Left ventricle myocardium inferior (tissue), 1 donor: ENCODE measurements at regions of chr1 and their contacts with region 1.

Region 1: GRCh38 chr1:153352523-153352922 is 3.9 kb upstream of the PGLYRP4 start:
- DNase-seq: peak; percentile 62
- H3K4me3 ChIP-seq: no peak overlapping the region
- H3K27ac ChIP-seq: no peak overlapping the region
- H3K4me1 ChIP-seq: no peaks in the 10 kb centered on the region
- H3K27me3 ChIP-seq: peaks cover 55% of the 10 kb centered on the region
- CTCF ChIP-seq: peak; percentile 95

Region 2: GRCh38 chr1:152983743-152984142 is 368.8 kb before region 1 on chr1 and contains the start of gene SPRR1A:
- intact Hi-C with region 1: no loop called
- DNase-seq: no peak
- H3K4me3 ChIP-seq: no peak within 1 kb of the TSS
- H3K27ac ChIP-seq: no peak within 1 kb of the TSS
- H3K4me1 ChIP-seq: no peaks in the 10 kb centered on the region
- H3K27me3 ChIP-seq: peaks cover 27% of the 10 kb centered on the region
- CTCF ChIP-seq: no peak
- total RNA-seq, gene SPRR1A: not detected

Region 3: GRCh38 chr1:153494976-153495535 is 142.5 kb after region 1 on chr1:
- intact Hi-C with region 1: loop called (anchors 5 kb)
- DNase-seq: peak; percentile 68
- H3K4me3 ChIP-seq: no peak overlapping the region
- H3K27ac ChIP-seq: no peak overlapping the region
- H3K4me1 ChIP-seq: peaks cover 12% of the 10 kb centered on the region
- H3K27me3 ChIP-seq: no peaks in the 10 kb centered on the region
- CTCF ChIP-seq: peak; percentile 94